ENCODE measurements at regions of chr6 and their contacts with region 1.

Region 1: GRCh38 chr6:150813319-150813992 is 52.0 kb upstream of the MTHFD1L start:
- DNase-seq: peak; percentile 43 to 81
- H3K4me3 ChIP-seq: no peak overlapping the region; the same call in 1 of the 2 replicates
- H3K27ac ChIP-seq: peak overlapping the region; percentile 100
- H3K4me1 ChIP-seq: peaks cover 35% of the 10 kb centered on the region
- H3K27me3 ChIP-seq: no peaks in the 10 kb centered on the region
- CTCF ChIP-seq: no peak

Region 2: GRCh38 chr6:149648148-149649145 is 1165.0 kb before region 1 on chr6 and contains the start of gene KATNA1:
- CTCF ChIA-PET with region 1: no interaction called
- POLR2A ChIA-PET with region 1: no interaction called
- intact Hi-C with region 1: no loop called
- DNase-seq: peak; percentile 79 to 90
- H3K4me3 ChIP-seq: peak within 1 kb of the TSS; percentile 81
- H3K27ac ChIP-seq: peak within 1 kb of the TSS; percentile 67
- H3K4me1 ChIP-seq: peaks cover 20% of the 10 kb centered on the region
- H3K27me3 ChIP-seq: no peaks in the 10 kb centered on the region
- CTCF ChIP-seq: no peak
- total RNA-seq, gene KATNA1: 12.4 and 16.1 TPM in 2 replicates

Region 3: GRCh38 chr6:150068720-150069648 is 744.5 kb before region 1 on chr6 and contains the start of gene ULBP3:
- CTCF ChIA-PET with region 1: no interaction called
- POLR2A ChIA-PET with region 1: no interaction called
- intact Hi-C with region 1: loop called (anchors 2 kb)
- DNase-seq: peak; percentile 82 to 84
- H3K4me3 ChIP-seq: peak within 1 kb of the TSS; percentile 74
- H3K27ac ChIP-seq: no peak within 1 kb of the TSS
- H3K4me1 ChIP-seq: peaks cover 24% of the 10 kb centered on the region
- H3K27me3 ChIP-seq: no peaks in the 10 kb centered on the region
- CTCF ChIP-seq: peak; percentile 56
- total RNA-seq, gene ULBP3: 3.8 and 4.2 TPM in 2 replicates

Region 4: DNA sequence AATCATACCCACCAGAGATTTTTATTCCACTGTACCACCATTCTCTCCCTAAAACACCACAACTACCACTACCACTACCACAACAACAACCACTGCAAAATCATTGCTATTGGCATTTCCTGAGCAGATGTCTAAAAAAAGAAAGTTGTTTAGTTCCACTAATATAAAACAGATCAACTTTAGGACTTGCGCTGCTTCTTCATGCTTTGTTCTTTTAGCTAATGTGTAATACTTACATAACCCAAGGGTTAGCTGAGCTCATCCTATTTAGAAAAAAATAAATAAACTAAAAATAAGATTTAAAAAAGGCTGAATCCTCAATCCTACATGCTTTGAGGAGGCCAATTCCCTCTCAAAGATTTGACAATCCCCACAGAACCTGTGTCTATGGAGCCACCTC is 433.2 kb before region 1 on chr6:
- CTCF ChIA-PET with region 1: no interaction called
- POLR2A ChIA-PET with region 1: no interaction called
- intact Hi-C with region 1: no loop called
- DNase-seq: no peak
- H3K4me3 ChIP-seq: no peak overlapping the region
- H3K27ac ChIP-seq: no peak overlapping the region
- H3K4me1 ChIP-seq: 0 out of 2 replicates have a peak, but pooled peaks cover 7% of the 10 kb centered on the region
- H3K27me3 ChIP-seq: no peaks in the 10 kb centered on the region
- CTCF ChIP-seq: no peak

Region 5: DNA sequence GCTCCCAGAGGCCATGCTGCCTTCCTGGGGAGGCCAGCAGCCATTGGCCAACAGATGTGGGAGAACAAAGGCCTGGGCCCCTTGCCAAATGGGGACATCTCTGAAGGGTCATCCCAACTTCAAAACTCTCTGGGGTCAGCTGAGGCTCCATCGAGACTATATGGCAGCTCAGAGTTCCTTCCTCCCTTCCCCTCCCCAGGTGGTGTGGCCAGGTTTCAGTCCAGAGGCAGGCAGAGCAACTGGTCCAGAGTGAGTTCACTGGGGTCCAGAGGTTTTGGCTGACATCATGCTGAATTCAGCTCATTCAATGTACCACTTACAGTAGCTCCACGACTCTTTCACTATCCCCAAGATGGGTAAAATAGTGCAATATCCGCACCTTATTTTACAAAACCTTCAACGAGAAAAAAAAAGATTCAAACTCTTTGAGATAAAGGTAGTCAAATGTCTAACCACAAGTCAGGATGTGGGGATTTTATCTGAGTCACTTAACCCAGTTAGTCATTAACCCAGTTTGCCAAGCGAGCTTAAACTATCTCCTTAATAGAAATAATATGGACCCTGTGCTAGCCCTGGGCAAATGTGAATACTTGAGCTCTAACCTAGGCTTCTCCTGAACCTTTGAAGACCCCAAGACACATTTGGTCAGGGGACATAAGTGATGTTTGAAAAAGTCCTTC is 322.2 kb before region 1 on chr6:
- CTCF ChIA-PET with region 1: interaction called, 4 read pairs
- POLR2A ChIA-PET with region 1: no interaction called
- intact Hi-C with region 1: loop called (anchors 2 kb)
- DNase-seq: peak; percentile 14 to 87
- H3K4me3 ChIP-seq: peak overlapping the region; percentile 45; the same call in 1 of the 2 replicates
- H3K27ac ChIP-seq: peak overlapping the region; percentile 98
- H3K4me1 ChIP-seq: peaks cover 50% of the 10 kb centered on the region
- H3K27me3 ChIP-seq: no peaks in the 10 kb centered on the region
- CTCF ChIP-seq: no peak

Region 6: GRCh38 chr6:150865406-150866146 is 52.1 kb after region 1 on chr6 and contains the start of gene MTHFD1L:
- CTCF ChIA-PET with region 1: interaction called, 7 read pairs
- POLR2A ChIA-PET with region 1: no interaction called
- intact Hi-C with region 1: loop called (anchors 1 kb)
- DNase-seq: peak; percentile 62 to 75
- H3K4me3 ChIP-seq: peak within 1 kb of the TSS; percentile 63
- H3K27ac ChIP-seq: peak within 1 kb of the TSS; percentile 78
- H3K4me1 ChIP-seq: peaks cover 4% of the 10 kb centered on the region
- H3K27me3 ChIP-seq: no peaks in the 10 kb centered on the region
- CTCF ChIP-seq: peak; percentile 55
- total RNA-seq, gene MTHFD1L: 53.3 and 65.8 TPM in 2 replicates

Region 7: GRCh38 chr6:151288712-151289398 is 475.4 kb after region 1 on chr6:
- CTCF ChIA-PET with region 1: no interaction called
- POLR2A ChIA-PET with region 1: interaction called, 11 read pairs
- intact Hi-C with region 1: no loop called
- DNase-seq: no peak
- H3K4me3 ChIP-seq: no peak overlapping the region
- H3K27ac ChIP-seq: no peak overlapping the region
- H3K4me1 ChIP-seq: no peaks in the 10 kb centered on the region
- H3K27me3 ChIP-seq: no peaks in the 10 kb centered on the region
- CTCF ChIP-seq: no peak

Measured in PC-9 (cell line).